ENCODE measurements at regions of chr17 and their contacts with region 1.

Region 1: GRCh38 chr17:8138672-8139371 is 13.4 kb downstream of the PER1 start:
- DNase-seq: peak; percentile 94
- H3K4me3 Mint-ChIP-seq: no peak overlapping the region
- H3K27ac Mint-ChIP-seq: no peak overlapping the region
- H3K4me1 Mint-ChIP-seq: no peaks in the 10 kb centered on the region
- H3K27me3 Mint-ChIP-seq: no peaks in the 10 kb centered on the region
- CTCF ChIP-seq: peak; percentile 37

Region 2: DNA sequence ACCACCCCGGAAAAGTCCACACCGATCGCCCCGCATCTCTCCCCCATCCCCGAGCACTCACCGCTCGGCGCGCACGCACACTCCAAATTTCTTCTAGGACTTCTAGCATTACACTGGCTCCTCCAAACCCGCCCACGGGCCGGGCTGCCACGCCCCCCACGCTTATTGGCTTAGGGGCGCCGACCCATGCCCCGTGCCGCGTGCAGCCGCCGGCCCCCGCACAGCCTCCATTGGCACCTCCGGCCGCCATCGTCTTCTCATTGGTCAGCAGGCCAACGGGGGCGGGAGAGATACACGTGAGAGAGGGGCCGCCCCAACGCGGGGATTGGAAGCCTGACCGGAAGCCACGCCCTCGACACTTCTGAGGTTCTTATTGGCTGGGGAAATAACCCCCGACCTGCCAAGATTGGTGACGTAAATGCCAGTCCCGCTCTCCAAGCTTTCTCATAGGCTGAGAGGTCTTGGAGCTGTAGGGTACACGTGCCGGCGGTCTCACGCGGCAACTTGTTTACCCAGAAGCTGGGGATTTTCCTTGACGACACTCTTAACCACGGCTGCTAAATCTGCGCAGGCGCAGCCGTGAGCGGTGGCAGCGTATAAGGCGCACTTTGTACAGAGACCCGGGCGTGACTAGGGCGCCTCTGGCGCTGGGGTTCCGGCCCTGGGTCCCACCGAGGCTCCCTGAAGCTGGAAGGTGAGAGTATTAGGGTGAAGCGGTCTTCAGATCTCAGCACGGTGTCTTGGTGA is 17.6 kb after region 1 on chr17:
- CTCF ChIA-PET with region 1: interaction called, 4 read pairs
- intact Hi-C with region 1: loop called (anchors 1 kb)
- DNase-seq: peak; percentile 98
- H3K4me3 Mint-ChIP-seq: no peak overlapping the region
- H3K27ac Mint-ChIP-seq: no peak overlapping the region
- H3K4me1 Mint-ChIP-seq: no peaks in the 10 kb centered on the region
- H3K27me3 Mint-ChIP-seq: no peaks in the 10 kb centered on the region
- CTCF ChIP-seq: no peak

Region 3: GRCh38 chr17:8189711-8190477 is 51.1 kb after region 1 on chr17 and contains the start of gene BORCS6:
- CTCF ChIA-PET with region 1: no interaction called
- intact Hi-C with region 1: loop called (anchors 5 kb)
- DNase-seq: peak; percentile 90
- H3K4me3 Mint-ChIP-seq: no peak within 1 kb of the TSS
- H3K27ac Mint-ChIP-seq: peak within 1 kb of the TSS; percentile 81
- H3K4me1 Mint-ChIP-seq: no peaks in the 10 kb centered on the region
- H3K27me3 Mint-ChIP-seq: no peaks in the 10 kb centered on the region
- CTCF ChIP-seq: no peak
- total RNA-seq, gene BORCS6: 3.7 and 3.9 TPM in 2 replicates

Region 4: GRCh38 chr17:8222630-8223356 is 84.0 kb after region 1 on chr17:
- CTCF ChIA-PET with region 1: no interaction called
- intact Hi-C with region 1: loop called (anchors 5 kb)
- DNase-seq: peak; percentile 88
- H3K4me3 Mint-ChIP-seq: peak overlapping the region; percentile 87
- H3K27ac Mint-ChIP-seq: peak overlapping the region; percentile 99
- H3K4me1 Mint-ChIP-seq: peaks cover 20% of the 10 kb centered on the region
- H3K27me3 Mint-ChIP-seq: no peaks in the 10 kb centered on the region
- CTCF ChIP-seq: no peak

Measured in Calu3 (cell line).